Dorsolateral prefrontal cortex (tissue), 120 donors: ENCODE measurements at regions of chr1 and their contacts with region 1.

Region 1: DNA sequence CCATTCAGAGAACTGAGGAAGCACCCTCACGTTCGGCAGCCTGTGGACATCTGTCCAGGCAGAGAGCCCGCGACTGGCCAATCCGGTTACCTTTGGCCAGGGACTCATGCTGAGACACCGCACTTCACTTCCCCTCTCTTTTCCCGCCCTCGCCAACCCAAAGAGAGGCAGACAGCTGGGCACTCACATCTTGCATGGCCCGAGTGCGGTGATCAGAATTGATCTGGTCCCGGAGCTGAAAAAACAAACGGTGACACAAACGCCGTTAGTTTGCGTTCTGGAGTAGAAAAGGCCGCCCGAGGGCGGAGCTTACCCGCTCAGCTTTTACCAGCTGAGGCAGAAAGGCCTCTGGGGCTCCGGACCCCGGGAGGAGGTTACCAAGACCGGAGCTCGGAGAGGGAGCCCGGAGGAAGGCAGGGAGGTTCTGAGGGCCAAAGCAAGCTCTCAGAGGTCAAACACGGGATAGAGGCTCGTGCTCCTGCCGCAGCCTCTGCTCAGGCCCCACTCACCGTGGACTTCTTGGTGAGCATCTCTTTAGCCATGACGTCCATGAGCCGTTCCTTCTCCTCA is 376 bp downstream of the SF3A3 start:
- DNase-seq: peak in 2 of 10 donors; percentile 17 to 41
- H3K4me3 ChIP-seq: peak overlapping the region; percentile 62 to 100 (median 94)
- H3K27ac ChIP-seq: peak overlapping the region in 52 of 59 donors; percentile 28 to 90 (median 77)
- H3K27me3 ChIP-seq: no peaks in the 10 kb centered on the region
- CTCF ChIP-seq: no peak

Region 2: GRCh38 chr1:37890378-37891014 is 99.0 kb before region 1 on chr1:
- intact Hi-C with region 1: no loop called
- DNase-seq: no peak
- H3K4me3 ChIP-seq: no peak overlapping the region
- H3K27ac ChIP-seq: peak overlapping the region in 1 of 59 donors; percentile 42
- H3K27me3 ChIP-seq: no peaks in the 10 kb centered on the region
- CTCF ChIP-seq: peak in 55 of 56 donors; percentile 25 to 69 (median 51)

Region 3: DNA sequence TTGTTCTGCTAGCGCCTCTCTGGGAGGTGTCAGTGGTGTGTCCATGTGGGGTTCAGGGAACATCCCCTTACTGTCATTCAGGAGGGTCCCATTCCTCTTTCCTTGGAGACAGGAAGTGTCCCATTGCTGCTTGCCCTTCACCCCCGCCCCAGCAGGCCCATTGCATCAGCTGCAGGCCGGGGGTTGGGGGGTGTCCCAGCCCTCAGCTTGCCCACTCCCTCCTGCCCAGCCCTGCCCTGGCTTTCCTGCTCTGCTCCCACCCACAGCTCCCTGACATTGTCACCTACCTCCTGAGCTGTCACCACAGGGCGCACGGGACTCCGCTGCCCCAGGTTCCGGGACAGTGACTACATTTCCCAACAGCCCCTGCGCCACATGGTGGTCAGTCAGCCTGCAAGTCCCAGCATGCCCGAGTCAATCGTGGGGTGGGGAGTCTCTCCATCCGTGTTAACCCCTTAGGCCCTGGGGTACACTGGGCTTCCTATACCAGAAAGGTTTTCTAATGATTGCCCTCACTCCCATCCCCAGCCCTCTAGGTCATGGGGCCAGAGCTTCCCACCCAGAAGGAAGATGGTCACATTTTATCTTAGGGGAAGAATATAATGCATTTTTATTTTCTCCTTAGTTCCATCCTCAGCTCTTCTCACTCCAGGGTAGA is 42.6 kb before region 1 on chr1 and contains the start of gene INPP5B:
- intact Hi-C with region 1: loop called (anchors 2 to 5 kb)
- DNase-seq: peak; percentile 86 to 97 (median 95)
- H3K4me3 ChIP-seq: peak within 1 kb of the TSS; percentile 60 to 97 (median 87)
- H3K27ac ChIP-seq: peak within 1 kb of the TSS; percentile 48 to 97 (median 89)
- H3K27me3 ChIP-seq: no peaks in the 10 kb centered on the region
- CTCF ChIP-seq: peak in 50 of 56 donors; percentile 19 to 63 (median 41)
- total RNA-seq, gene INPP5B: 23.9 to 71.7 (median 40.7) TPM

Region 4: DNA sequence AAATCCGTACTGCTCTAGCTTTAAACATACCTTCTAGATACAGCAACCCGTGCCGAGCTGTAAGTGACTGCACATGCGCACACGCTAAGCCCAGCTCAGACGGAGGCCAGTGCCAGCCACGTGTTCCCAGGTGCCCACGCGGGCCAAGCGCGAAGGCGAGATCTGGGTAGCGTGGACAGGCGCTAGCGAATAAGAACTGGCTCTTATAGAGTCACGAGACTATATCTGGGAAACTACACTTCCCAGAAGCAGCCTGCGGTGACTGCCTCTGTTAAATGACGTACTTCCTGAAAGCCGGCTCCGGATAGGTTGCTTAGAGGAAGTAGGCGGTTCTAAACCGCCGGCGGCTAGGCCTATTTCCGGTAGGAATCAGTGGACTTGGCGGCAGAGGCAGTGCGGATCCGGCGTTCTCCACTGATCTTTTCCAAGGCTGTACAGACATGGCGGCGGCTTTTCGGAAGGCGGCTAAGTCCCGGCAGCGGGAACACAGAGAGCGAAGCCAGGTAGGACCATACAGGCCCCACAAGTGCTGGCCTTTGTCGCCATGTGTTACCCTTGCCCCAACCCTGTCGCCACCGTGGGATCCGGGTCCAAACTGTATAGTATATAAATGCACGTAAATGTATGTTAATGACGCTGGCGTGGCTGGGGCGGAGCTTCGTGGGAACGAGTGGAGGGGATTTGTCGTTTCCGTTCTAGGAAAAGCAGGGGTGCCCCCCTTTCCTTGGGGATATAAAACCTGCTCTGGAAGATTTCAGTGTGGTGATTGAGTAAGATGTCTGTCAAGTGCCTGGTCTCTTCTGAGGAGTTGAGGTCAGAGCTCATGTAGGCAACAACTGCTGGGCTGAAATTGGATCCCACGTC is 23.1 kb after region 1 on chr1 and contains the start of gene UTP11:
- intact Hi-C with region 1: loop called (anchors 1 to 2 kb)
- DNase-seq: peak; percentile 79 to 97 (median 96)
- H3K4me3 ChIP-seq: peak within 1 kb of the TSS; percentile 56 to 99 (median 86)
- H3K27ac ChIP-seq: peak within 1 kb of the TSS; percentile 20 to 96 (median 84)
- H3K27me3 ChIP-seq: no peaks in the 10 kb centered on the region
- CTCF ChIP-seq: peak in 22 of 56 donors; percentile 3 to 56 (median 28)
- total RNA-seq, gene UTP11: 13.6 to 33.4 (median 24.4) TPM

Region 5: GRCh38 chr1:38018864-38019343 is 29.5 kb after region 1 on chr1:
- intact Hi-C with region 1: loop called in 1 of 2 experiments (anchors 1 kb)
- DNase-seq: no peak
- H3K4me3 ChIP-seq: no peak overlapping the region
- H3K27ac ChIP-seq: no peak overlapping the region
- H3K27me3 ChIP-seq: no peaks in the 10 kb centered on the region
- CTCF ChIP-seq: peak; percentile 16 to 72 (median 51)